ENCODE measurements at regions of chr3 and their contacts with region 1.

Region 1: DNA sequence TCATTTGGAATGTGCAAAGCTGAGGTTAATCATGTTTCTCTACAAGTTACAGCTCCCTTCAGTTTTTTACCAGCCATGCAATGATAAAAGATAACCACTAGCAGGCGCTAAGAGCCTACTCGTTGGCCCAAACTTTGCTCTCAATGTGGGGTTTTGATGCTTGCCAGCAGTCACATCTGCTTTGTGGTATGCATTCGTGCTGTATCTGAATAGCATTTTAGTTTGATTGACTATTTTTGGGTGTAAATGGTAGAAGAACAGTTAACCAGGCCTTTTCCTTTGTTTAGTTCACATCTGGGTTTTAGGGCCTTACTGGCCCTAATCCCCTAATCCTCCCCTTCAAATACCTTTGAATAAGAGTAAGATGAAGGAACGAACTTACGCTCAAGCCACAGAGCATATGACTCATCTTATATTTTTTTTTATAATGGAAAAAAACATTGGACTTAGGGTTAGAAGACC is 4.4 kb upstream of the CLDN11 start:
- DNase-seq: no peak
- ATAC-seq: peak; percentile 82 to 91 (median 86)
- H3K4me3 ChIP-seq: no peak overlapping the region
- H3K27ac ChIP-seq: no peak overlapping the region
- H3K4me1 ChIP-seq: peaks cover 0 to 10% (median 0%) of the 10 kb centered on the region in 4 donors
- H3K27me3 ChIP-seq: peaks cover 0 to 8% of the 10 kb centered on the region in 2 donors
- CTCF ChIP-seq: peak; percentile 96
- POLR2A ChIP-seq: no peak

Region 2: GRCh38 chr3:170368921-170369320 is 45.3 kb before region 1 on chr3:
- intact Hi-C with region 1: no loop called
- DNase-seq: no peak
- ATAC-seq: no peak
- H3K4me3 ChIP-seq: no peak overlapping the region
- H3K27ac ChIP-seq: no peak overlapping the region
- H3K4me1 ChIP-seq: peaks cover 0 to 4% (median 0%) of the 10 kb centered on the region in 4 donors
- H3K27me3 ChIP-seq: no peaks in the 10 kb centered on the region
- CTCF ChIP-seq: peak in 3 of 4 donors; percentile 23 to 35 (median 24)
- POLR2A ChIP-seq: no peak

Region 3: GRCh38 chr3:170811928-170812591 is 397.8 kb after region 1 on chr3:
- intact Hi-C with region 1: loop called in 1 of 2 experiments (anchors 10 kb)
- DNase-seq: peak in 2 of 3 donors; percentile 29 to 64
- ATAC-seq: peak; percentile 87 to 93 (median 88)
- H3K4me3 ChIP-seq: no peak overlapping the region
- H3K27ac ChIP-seq: no peak overlapping the region
- H3K4me1 ChIP-seq: no peaks in the 10 kb centered on the region
- H3K27me3 ChIP-seq: no peaks in the 10 kb centered on the region
- CTCF ChIP-seq: peak; percentile 87 to 97 (median 91)
- POLR2A ChIP-seq: no peak

Measured in right lobe of liver (tissue), 6 donors.